ENCODE measurements at regions of chr9 and their contacts with region 1.

Region 1: GRCh38 chr9:35657546-35658136 is at the start of gene RMRP:
- DNase-seq: peak; percentile 58 to 98 (median 83)
- ATAC-seq: peak; percentile 72
- H3K4me3 ChIP-seq: peak within 1 kb of the TSS; percentile 91 to 94
- H3K4me3 Mint-ChIP-seq: peak within 1 kb of the TSS; percentile 93
- H3K27ac ChIP-seq: peak within 1 kb of the TSS; percentile 99 to 100
- H3K27ac Mint-ChIP-seq: peak within 1 kb of the TSS; percentile 98
- H3K4me1 ChIP-seq: peaks cover 45% of the 10 kb centered on the region
- H3K4me1 Mint-ChIP-seq: peaks cover 69% of the 10 kb centered on the region
- H3K27me3 ChIP-seq: peaks cover 0 to 3% of the 10 kb centered on the region in 2 experiments
- H3K27me3 Mint-ChIP-seq: peaks cover 2% of the 10 kb centered on the region
- CTCF ChIP-seq: no peak
- total RNA-seq, gene RMRP: 22,073 to 26,359 TPM

Region 2: DNA sequence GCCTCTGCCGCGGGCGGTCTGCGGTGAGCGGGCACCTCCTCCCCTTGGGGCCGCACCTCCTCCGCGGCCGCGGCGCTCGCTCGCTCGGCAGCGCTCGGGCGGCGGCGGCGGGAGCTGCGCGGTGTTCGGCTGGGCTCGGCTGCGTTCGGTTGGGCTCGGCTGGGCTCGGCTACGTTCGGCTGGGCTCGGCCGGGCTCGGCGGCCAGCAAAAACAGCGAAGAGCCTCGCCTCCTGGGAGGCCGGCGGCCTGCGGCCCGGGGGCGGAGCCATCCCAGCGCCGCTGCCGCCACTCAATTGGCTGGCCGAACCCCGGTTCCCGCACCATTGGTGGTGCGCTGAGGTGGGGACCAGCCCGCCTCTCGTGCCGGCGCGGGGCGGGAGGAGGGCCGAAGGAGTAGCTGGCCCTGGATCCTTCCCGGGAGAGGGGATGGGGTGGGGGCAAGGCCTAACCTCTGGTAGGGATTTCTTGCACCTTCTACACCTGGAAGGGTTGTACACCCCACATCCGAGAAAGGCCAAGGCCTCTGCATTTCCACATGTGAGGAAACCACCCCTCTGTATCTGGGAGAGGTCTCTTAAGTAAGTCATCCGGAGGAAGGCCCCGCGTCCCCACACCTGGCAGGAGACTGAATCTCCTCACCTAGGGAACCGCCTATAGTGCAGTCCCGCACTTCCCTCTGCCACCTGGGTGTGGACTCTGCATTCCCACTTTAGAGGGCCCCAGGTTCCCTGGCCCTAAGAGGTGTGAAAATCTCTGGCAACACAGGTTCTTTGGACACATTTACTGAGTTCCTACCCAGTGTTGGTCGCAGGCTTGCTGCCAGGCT is 1134.5 kb before region 1 on chr9 and contains the start of gene ENHO:
- CTCF ChIA-PET with region 1: no interaction called
- POLR2A ChIA-PET with region 1: no interaction called
- intact Hi-C with region 1: loop called in 1 of 2 experiments (anchors 10 kb)
- DNase-seq: peak; percentile 79 to 96 (median 87)
- ATAC-seq: peak; percentile 97
- H3K4me3 ChIP-seq: peak within 1 kb of the TSS; percentile 48 to 70
- H3K4me3 Mint-ChIP-seq: peak within 1 kb of the TSS; percentile 83
- H3K27ac ChIP-seq: peak within 1 kb of the TSS in 1 of 2 experiments; percentile 33
- H3K27ac Mint-ChIP-seq: no peak within 1 kb of the TSS
- H3K4me1 ChIP-seq: peaks cover 9% of the 10 kb centered on the region
- H3K4me1 Mint-ChIP-seq: peaks cover 4% of the 10 kb centered on the region
- H3K27me3 ChIP-seq: no peaks in the 10 kb centered on the region
- H3K27me3 Mint-ChIP-seq: peaks cover 2% of the 10 kb centered on the region
- CTCF ChIP-seq: no peak
- total RNA-seq, gene ENHO: not detected

Region 3: DNA sequence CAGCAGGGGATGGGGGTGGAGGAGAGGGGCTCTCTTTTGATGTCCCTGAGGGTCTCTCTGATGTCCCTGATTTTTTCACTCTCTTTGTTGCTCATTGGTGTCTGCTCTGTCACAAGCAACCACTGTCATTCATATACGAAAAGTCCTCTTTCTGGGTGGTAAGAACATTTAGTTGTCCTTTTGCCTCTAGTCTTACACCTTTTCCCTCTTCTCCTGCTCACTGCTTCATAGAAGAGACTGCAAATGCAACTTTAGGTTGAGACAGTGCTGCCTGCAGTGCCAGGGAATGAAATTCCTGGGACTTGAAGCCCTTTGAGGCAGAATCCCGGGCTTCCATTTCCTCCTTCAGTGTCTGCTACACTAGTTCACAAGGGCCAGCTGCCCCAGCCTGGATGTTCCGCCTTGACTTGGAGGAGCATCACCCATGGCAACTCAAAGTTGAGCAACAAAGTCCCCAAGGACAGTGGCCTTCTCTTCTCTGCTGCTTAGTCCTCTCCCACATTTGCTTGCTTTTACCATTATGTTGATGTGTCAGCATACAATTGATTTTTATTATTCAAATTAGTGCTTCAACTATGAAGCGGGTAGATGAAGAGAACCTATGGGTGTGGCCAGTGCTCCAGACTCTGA is 262.4 kb before region 1 on chr9:
- CTCF ChIA-PET with region 1: no interaction called
- POLR2A ChIA-PET with region 1: no interaction called
- intact Hi-C with region 1: no loop called
- DNase-seq: no peak
- ATAC-seq: no peak
- H3K4me3 ChIP-seq: no peak overlapping the region
- H3K4me3 Mint-ChIP-seq: no peak overlapping the region
- H3K27ac ChIP-seq: no peak overlapping the region
- H3K27ac Mint-ChIP-seq: no peak overlapping the region
- H3K4me1 ChIP-seq: no peaks in the 10 kb centered on the region
- H3K4me1 Mint-ChIP-seq: no peaks in the 10 kb centered on the region
- H3K27me3 ChIP-seq: no peaks in the 10 kb centered on the region
- H3K27me3 Mint-ChIP-seq: peaks cover 7% of the 10 kb centered on the region
- CTCF ChIP-seq: no peak

Region 4: GRCh38 chr9:35426627-35427026 is 231.0 kb before region 1 on chr9:
- CTCF ChIA-PET with region 1: no interaction called
- POLR2A ChIA-PET with region 1: no interaction called
- intact Hi-C with region 1: no loop called
- DNase-seq: no peak
- ATAC-seq: no peak
- H3K4me3 ChIP-seq: no peak overlapping the region
- H3K4me3 Mint-ChIP-seq: no peak overlapping the region
- H3K27ac ChIP-seq: no peak overlapping the region
- H3K27ac Mint-ChIP-seq: no peak overlapping the region
- H3K4me1 ChIP-seq: no peaks in the 10 kb centered on the region
- H3K4me1 Mint-ChIP-seq: no peaks in the 10 kb centered on the region
- H3K27me3 ChIP-seq: no peaks in the 10 kb centered on the region
- H3K27me3 Mint-ChIP-seq: peaks cover 33% of the 10 kb centered on the region
- CTCF ChIP-seq: no peak

Region 5: DNA sequence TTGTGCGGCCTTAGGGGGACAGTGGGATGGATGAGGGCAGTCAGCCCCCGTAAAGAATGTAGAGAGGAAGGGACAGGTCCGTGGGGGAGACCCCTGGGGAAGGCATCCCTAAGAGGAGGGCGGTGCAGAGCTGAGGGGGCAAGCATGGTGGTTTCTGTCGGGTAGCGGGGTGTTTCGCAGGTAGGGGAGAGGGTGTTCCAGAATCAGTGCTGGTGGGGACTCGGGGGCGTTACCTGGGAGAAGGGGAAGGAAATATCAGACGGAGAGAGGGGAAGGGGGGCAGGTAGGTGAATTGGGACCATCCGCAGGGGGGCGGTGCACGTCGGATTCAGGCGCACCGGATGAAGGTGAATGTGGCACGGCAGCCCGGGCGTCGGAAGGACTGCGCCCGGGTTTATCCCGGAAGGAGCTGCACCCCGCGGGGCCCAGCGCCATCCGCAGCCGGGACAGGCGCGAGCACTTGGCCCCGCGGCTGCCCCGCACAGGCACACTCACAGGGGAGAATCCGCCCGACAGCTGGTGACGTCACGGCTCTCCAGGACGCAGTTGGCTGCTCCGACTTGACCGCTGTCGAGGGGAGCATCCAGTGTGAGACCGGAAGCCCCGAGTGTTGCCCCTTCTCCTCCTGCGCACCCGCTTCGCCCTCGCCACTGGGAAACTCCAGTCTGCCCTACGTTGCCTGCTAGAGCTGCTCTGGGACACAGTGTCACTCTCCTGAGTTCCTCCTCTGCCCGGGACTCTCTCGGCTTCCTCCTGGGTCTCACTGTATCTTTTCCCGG is 40.8 kb before region 1 on chr9:
- CTCF ChIA-PET with region 1: interaction called, 46 read pairs
- POLR2A ChIA-PET with region 1: interaction called, 16 read pairs
- intact Hi-C with region 1: loop called (anchors 1 to 2 kb)
- DNase-seq: peak; percentile 22 to 92 (median 73)
- ATAC-seq: peak; percentile 74
- H3K4me3 ChIP-seq: peak overlapping the region; percentile 44 to 60
- H3K4me3 Mint-ChIP-seq: peak overlapping the region; percentile 85
- H3K27ac ChIP-seq: peak overlapping the region; percentile 36 to 93
- H3K27ac Mint-ChIP-seq: peak overlapping the region; percentile 92
- H3K4me1 ChIP-seq: peaks cover 34% of the 10 kb centered on the region
- H3K4me1 Mint-ChIP-seq: peaks cover 39% of the 10 kb centered on the region
- H3K27me3 ChIP-seq: no peaks in the 10 kb centered on the region
- H3K27me3 Mint-ChIP-seq: no peaks in the 10 kb centered on the region
- CTCF ChIP-seq: peak; percentile 22

Region 6: DNA sequence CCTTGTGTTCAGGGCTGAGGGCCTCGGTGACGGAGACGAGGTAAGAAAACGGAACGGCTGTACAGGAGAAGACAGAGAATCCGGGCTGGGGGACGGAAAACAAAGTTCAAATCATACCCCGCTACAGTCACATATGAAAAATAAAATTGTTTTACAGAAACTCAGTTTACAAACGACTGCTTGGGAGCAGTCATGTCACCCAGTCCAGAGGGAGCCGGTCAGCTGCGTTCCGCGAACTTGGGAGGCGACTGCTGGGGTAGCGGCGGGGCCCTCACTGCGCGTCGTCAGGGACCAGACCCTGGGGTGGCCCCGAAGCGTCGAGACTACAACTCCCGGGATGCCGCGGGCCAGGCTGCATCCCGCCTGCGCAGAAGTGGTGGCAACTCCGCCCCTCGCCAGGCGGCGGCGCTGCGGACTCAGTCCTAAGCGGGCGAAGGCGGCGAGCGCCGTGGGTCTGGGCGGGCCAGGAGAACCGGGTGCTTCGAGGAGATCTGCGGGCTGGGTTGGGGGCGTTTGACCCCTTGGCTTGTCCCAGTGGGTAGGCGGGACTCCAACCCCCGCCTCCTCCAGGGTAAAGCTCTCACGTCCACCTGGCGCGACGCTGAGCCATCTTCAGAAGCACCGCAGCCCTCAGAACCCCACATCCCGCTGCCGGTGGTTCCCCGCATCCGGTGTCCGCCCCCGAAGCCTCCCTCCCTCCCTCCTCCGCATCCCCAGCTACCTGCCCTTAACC is 10.9 kb before region 1 on chr9:
- CTCF ChIA-PET with region 1: interaction called, 135 read pairs
- POLR2A ChIA-PET with region 1: interaction called, 112 read pairs
- intact Hi-C with region 1: loop called (anchors 1 kb)
- DNase-seq: peak; percentile 85 to 95 (median 90)
- ATAC-seq: peak; percentile 86
- H3K4me3 ChIP-seq: peak overlapping the region; percentile 71 to 82
- H3K4me3 Mint-ChIP-seq: peak overlapping the region; percentile 93
- H3K27ac ChIP-seq: peak overlapping the region; percentile 67 to 89
- H3K27ac Mint-ChIP-seq: peak overlapping the region; percentile 95
- H3K4me1 ChIP-seq: peaks cover 55% of the 10 kb centered on the region
- H3K4me1 Mint-ChIP-seq: peaks cover 61% of the 10 kb centered on the region
- H3K27me3 ChIP-seq: no peaks in the 10 kb centered on the region
- H3K27me3 Mint-ChIP-seq: no peaks in the 10 kb centered on the region
- CTCF ChIP-seq: peak; percentile 77

Region 7: DNA sequence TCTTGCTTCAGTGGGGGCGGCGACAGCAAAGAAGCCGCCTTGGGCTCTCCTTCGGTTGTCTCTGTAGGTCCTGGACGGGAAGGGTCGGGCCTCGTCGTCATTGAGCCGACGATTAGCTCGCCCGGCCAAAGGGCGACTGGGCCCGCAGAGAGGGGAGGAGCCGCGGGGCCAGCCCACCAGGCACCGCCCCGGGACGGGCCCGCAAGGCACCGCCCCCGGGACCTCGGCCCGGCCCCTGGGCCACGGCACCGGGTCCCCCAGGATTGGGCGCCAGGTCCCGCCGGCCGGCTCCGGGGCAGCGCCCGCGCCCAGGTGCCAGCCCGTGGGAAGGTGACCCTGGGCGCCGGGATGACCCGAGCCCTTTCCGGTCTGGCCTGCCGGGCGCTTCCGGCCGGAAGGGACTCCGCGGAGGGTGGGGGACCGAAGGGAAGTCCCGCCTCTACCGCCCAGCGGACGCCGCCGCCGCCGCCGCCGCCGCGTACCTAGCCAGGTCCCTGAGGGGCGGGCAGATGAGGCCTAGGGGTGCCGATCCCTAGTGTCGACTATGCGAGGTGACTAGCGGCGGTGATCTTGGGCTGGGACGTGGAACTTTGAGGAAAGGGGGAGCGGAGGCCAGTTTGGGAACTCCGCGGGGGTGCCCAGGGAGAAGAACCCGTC is 91.3 kb after region 1 on chr9 and contains the starts of genes GBA2 and RGP1:
- CTCF ChIA-PET with region 1: interaction called, 14 read pairs
- POLR2A ChIA-PET with region 1: interaction called, 5 read pairs
- intact Hi-C with region 1: no loop called
- DNase-seq: peak in 8 of 9 experiments; percentile 50 to 80 (median 66)
- ATAC-seq: peak; percentile 66
- H3K4me3 ChIP-seq: peak within 1 kb of the TSS; percentile 80 to 91
- H3K4me3 Mint-ChIP-seq: peak within 1 kb of the TSS; percentile 98
- H3K27ac ChIP-seq: peak within 1 kb of the TSS; percentile 68 to 86
- H3K27ac Mint-ChIP-seq: peak within 1 kb of the TSS; percentile 94
- H3K4me1 ChIP-seq: peaks cover 41% of the 10 kb centered on the region
- H3K4me1 Mint-ChIP-seq: peaks cover 50% of the 10 kb centered on the region
- H3K27me3 ChIP-seq: no peaks in the 10 kb centered on the region
- H3K27me3 Mint-ChIP-seq: no peaks in the 10 kb centered on the region
- CTCF ChIP-seq: no peak
- total RNA-seq, gene GBA2: 14.1 to 14.3 TPM
- total RNA-seq, gene RGP1: 9.6 to 10.4 TPM